ENCODE measurements at regions of chr2 and their contacts with region 1.

Region 1: GRCh38 chr2:10448208-10448645 is at the start of gene ODC1:
- DNase-seq: peak; percentile 97 to 99 (median 98)
- H3K4me3 ChIP-seq: peak within 1 kb of the TSS; percentile 47 to 90
- H3K4me3 Mint-ChIP-seq: peak within 1 kb of the TSS; percentile 86 to 95 (median 90)
- H3K27ac ChIP-seq: peak within 1 kb of the TSS; percentile 86
- H3K27ac Mint-ChIP-seq: peak within 1 kb of the TSS; percentile 88 to 96 (median 93)
- H3K4me1 ChIP-seq: peaks cover 42% of the 10 kb centered on the region
- H3K4me1 Mint-ChIP-seq: peaks cover 17 to 57% (median 41%) of the 10 kb centered on the region in 4 donors
- H3K27me3 ChIP-seq: no peaks in the 10 kb centered on the region
- H3K27me3 Mint-ChIP-seq: no peaks in the 10 kb centered on the region
- total RNA-seq, gene ODC1: 32.5 to 35.4 TPM

Region 2: DNA sequence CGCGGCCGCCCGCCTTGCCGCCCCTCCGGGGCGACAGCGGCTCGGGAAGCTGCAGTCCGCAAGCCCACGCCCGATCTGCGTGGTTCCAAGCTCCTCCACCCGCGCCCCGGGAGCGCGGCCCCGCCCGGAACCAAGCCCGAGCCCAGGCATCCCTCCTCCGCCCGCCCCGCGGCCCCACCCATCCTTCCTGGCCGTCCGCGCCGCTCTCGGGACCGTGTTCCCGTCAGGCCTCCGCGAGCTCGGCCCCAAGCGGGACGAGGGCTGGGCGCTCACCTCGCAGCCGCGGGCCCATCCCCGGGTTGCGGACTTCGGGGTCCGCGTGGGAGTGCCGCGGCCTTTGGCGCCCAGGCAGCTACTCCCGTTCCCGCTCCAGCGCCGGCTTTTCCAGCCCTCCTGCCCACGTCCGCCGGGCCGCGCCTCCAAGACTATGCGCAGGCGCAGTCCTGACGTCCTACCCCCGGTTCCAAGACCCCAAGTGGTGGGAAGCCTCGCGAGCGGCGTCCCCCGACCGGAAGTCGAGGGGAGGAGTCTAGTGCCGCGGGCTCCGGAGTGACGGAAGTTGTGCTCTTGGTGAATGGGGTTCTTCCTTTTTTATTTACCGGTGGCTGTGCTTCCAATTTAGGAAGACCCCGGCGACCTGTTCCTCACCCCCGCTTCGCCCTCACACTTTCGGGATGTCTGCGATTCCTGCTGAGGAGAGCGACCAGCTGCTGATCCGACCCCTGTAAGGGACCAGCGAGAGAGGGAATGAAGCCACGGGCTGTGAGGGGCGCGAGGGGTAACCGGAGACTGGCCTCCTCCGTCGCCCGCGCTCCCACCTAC is 1024.9 kb before region 1 on chr2 and contains the starts of genes CPSF3 and ITGB1BP1:
- CTCF ChIA-PET with region 1: no interaction called
- POLR2A ChIA-PET with region 1: interaction called, 3 read pairs
- intact Hi-C with region 1: loop called (anchors 5 kb)
- DNase-seq: peak; percentile 93 to 95 (median 94)
- H3K4me3 ChIP-seq: peak within 1 kb of the TSS; percentile 77 to 97
- H3K4me3 Mint-ChIP-seq: peak within 1 kb of the TSS in 5 of 8 donors; percentile 91 to 93 (median 91)
- H3K27ac ChIP-seq: peak within 1 kb of the TSS; percentile 88
- H3K27ac Mint-ChIP-seq: peak within 1 kb of the TSS in 6 of 7 donors; percentile 85 to 95 (median 94)
- H3K4me1 ChIP-seq: peaks cover 43% of the 10 kb centered on the region
- H3K4me1 Mint-ChIP-seq: peaks cover 24 to 30% (median 28%) of the 10 kb centered on the region in 4 donors
- H3K27me3 ChIP-seq: no peaks in the 10 kb centered on the region
- H3K27me3 Mint-ChIP-seq: no peaks in the 10 kb centered on the region
- total RNA-seq, gene CPSF3: 20.9 to 22.4 TPM
- total RNA-seq, gene ITGB1BP1: 55.1 to 55.8 TPM

Region 3: GRCh38 chr2:10043906-10044601 is 404.2 kb before region 1 on chr2:
- CTCF ChIA-PET with region 1: no interaction called
- POLR2A ChIA-PET with region 1: interaction called, 15 read pairs
- intact Hi-C with region 1: loop called (anchors 1 kb)
- DNase-seq: peak; percentile 92 to 97 (median 95)
- H3K4me3 ChIP-seq: peak overlapping the region in 1 of 2 donors; percentile 43
- H3K4me3 Mint-ChIP-seq: peak overlapping the region; percentile 69 to 86 (median 84)
- H3K27ac ChIP-seq: peak overlapping the region; percentile 66
- H3K27ac Mint-ChIP-seq: peak overlapping the region; percentile 90 to 99 (median 98)
- H3K4me1 ChIP-seq: peaks cover 21% of the 10 kb centered on the region
- H3K4me1 Mint-ChIP-seq: peaks cover 18 to 45% (median 27%) of the 10 kb centered on the region in 4 donors
- H3K27me3 ChIP-seq: no peaks in the 10 kb centered on the region
- H3K27me3 Mint-ChIP-seq: no peaks in the 10 kb centered on the region

Region 4: GRCh38 chr2:10331027-10331701 is 117.1 kb before region 1 on chr2:
- CTCF ChIA-PET with region 1: no interaction called
- POLR2A ChIA-PET with region 1: interaction called, 34 read pairs
- intact Hi-C with region 1: no loop called
- DNase-seq: peak; percentile 63 to 86 (median 70)
- H3K4me3 ChIP-seq: peak overlapping the region; percentile 67 to 68
- H3K4me3 Mint-ChIP-seq: peak overlapping the region; percentile 89 to 96 (median 94)
- H3K27ac ChIP-seq: peak overlapping the region; percentile 81
- H3K27ac Mint-ChIP-seq: peak overlapping the region; percentile 89 to 98 (median 95)
- H3K4me1 ChIP-seq: peaks cover 79% of the 10 kb centered on the region
- H3K4me1 Mint-ChIP-seq: peaks cover 54 to 89% (median 75%) of the 10 kb centered on the region in 4 donors
- H3K27me3 ChIP-seq: no peaks in the 10 kb centered on the region
- H3K27me3 Mint-ChIP-seq: no peaks in the 10 kb centered on the region

Region 5: DNA sequence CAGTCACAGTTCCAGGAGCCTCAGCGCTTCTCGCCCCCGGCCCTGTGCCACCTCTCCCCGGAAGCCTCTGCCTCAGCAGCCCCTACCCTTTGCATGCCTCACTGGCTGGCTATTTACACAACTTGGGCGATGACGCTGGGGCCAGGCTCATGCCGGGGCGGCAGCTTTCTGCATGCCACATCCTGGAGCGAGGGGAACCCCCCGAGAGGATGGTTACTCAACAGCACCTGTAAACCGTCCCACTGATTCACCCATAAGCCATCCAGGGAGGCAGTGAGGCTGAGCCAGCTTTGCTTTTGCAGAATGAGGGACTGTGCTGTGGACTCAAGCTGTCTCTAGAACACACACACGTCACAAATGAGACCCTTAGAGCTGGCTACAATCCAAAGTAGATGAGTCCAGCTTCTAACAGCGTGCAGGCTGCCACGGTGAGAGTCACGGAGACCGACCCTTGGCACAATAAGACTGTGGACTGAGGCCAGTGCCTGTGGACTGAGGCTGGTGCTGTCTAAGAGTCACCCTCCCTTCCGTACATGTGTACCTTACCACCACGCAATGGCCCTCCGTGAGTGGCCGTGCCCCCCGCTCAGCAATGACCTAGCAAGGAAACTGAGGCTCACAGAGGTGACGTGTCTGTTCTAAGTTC is 45.5 kb after region 1 on chr2:
- CTCF ChIA-PET with region 1: interaction called, 9 read pairs
- POLR2A ChIA-PET with region 1: interaction called, 50 read pairs
- intact Hi-C with region 1: loop called (anchors 1 kb)
- DNase-seq: peak; percentile 82 to 95 (median 89)
- H3K4me3 ChIP-seq: peak overlapping the region in 1 of 2 donors; percentile 33
- H3K4me3 Mint-ChIP-seq: peak overlapping the region in 7 of 8 donors; percentile 46 to 82 (median 53)
- H3K27ac ChIP-seq: peak overlapping the region; percentile 52
- H3K27ac Mint-ChIP-seq: peak overlapping the region; percentile 86 to 96 (median 92)
- H3K4me1 ChIP-seq: peaks cover 29% of the 10 kb centered on the region
- H3K4me1 Mint-ChIP-seq: peaks cover 15 to 39% (median 21%) of the 10 kb centered on the region in 4 donors
- H3K27me3 ChIP-seq: no peaks in the 10 kb centered on the region
- H3K27me3 Mint-ChIP-seq: peaks cover 5 to 6% of the 10 kb centered on the region in 2 donors

Region 6: DNA sequence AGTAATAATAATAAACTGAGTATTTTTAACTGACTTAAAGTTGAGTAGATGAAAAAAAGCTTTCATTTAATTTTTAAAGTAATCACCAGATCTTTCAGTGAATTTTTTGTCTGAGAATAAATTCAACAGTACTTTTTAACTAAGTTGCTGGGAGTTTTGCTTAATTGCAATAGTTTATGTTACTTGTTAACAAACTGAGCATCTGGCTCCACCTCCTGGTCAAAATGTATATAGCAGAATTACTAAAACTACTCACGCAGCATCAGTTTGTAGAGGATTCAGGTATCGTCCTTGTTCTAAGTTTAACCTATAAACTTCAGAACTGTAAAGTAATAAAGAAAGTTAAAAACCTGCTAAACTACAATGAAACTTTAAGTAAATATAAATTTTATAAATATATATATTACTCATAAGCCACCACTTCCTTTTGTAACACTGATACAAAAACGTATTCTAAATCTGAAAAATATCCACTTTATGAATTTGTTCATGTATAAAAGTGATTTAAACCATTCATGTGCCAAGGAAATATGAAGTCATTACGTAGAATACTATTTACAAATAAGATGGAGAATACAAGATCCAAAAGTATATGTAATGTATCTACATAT is 220.3 kb after region 1 on chr2:
- CTCF ChIA-PET with region 1: no interaction called
- POLR2A ChIA-PET with region 1: interaction called, 3 read pairs
- intact Hi-C with region 1: loop called (anchors 2 kb)
- DNase-seq: peak; percentile 43 to 63 (median 60)
- H3K4me3 ChIP-seq: no peak overlapping the region
- H3K4me3 Mint-ChIP-seq: no peak overlapping the region
- H3K27ac ChIP-seq: no peak overlapping the region
- H3K27ac Mint-ChIP-seq: no peak overlapping the region
- H3K4me1 ChIP-seq: no peaks in the 10 kb centered on the region
- H3K4me1 Mint-ChIP-seq: peaks cover 0 to 4% (median under 1%) of the 10 kb centered on the region in 4 donors
- H3K27me3 ChIP-seq: no peaks in the 10 kb centered on the region
- H3K27me3 Mint-ChIP-seq: no peaks in the 10 kb centered on the region

Region 7: GRCh38 chr2:10963155-10963554 is 514.9 kb after region 1 on chr2:
- CTCF ChIA-PET with region 1: no interaction called
- POLR2A ChIA-PET with region 1: no interaction called
- intact Hi-C with region 1: no loop called
- DNase-seq: no peak
- H3K4me3 ChIP-seq: no peak overlapping the region
- H3K4me3 Mint-ChIP-seq: no peak overlapping the region
- H3K27ac ChIP-seq: no peak overlapping the region
- H3K27ac Mint-ChIP-seq: no peak overlapping the region
- H3K4me1 ChIP-seq: no peaks in the 10 kb centered on the region
- H3K4me1 Mint-ChIP-seq: no peaks in the 10 kb centered on the region
- H3K27me3 ChIP-seq: no peaks in the 10 kb centered on the region
- H3K27me3 Mint-ChIP-seq: peaks cover 7 to 34% of the 10 kb centered on the region in 2 donors

Measured in CD4-positive, alpha-beta memory T cell (primary cell).